GM23248 (cell line): ENCODE measurements at regions of chr4 and their contacts with region 1.

Region 1: GRCh38 chr4:155353923-155354540 is 22.7 kb downstream of the MAP9 start:
- DNase-seq: peak; percentile 70
- H3K4me3 ChIP-seq: no peak overlapping the region
- H3K27ac ChIP-seq: no peak overlapping the region
- H3K4me1 ChIP-seq: no peaks in the 10 kb centered on the region
- H3K27me3 ChIP-seq: no peaks in the 10 kb centered on the region

Region 2: GRCh38 chr4:154551872-154552686 is 802.0 kb before region 1 on chr4:
- in situ Hi-C with region 1: loop called (anchors 25 kb)
- DNase-seq: peak; percentile 89
- H3K4me3 ChIP-seq: no peak overlapping the region
- H3K27ac ChIP-seq: no peak overlapping the region
- H3K4me1 ChIP-seq: peaks cover 10% of the 10 kb centered on the region
- H3K27me3 ChIP-seq: no peaks in the 10 kb centered on the region

Region 3: DNA sequence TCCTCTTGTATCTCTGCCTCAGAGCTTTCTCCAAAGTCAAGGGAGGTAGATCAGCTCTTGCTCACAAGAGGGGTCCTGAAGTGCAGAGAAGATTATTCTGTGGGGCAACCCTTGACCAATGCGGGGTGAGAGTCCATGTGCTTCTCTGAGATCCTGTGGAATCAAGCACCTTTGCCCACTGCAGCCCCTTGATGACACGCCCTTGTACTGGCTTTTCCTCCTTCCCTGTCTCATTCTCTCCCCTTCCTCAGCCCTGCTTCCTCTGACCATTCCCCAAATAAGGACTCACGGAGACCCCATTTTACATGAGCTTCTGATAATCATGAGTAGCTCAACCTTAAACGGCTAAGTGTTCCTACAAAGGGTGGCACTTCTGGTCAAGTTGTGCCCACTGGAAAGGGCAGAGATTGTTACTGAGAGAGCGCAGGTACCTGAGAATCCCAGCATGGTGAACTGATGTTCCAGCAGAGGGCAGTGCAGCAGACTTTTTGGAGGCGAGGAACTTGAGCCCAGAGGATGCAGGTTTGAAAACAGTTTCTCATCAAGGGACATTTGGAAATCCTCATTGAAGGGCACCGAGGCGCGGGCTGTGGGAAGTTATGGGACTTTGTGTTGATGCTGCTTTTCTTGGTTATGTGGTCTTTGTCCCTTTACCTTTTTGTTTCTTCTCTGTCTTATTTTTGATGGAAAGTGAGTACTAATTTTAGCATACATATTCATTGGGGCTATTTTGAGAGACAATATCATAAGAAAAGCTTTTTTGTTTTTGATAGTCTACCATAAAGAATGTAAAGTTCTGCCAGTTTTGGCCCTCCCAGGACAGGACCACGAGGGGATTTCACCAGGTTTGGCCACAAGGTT is 371.6 kb before region 1 on chr4:
- in situ Hi-C with region 1: loop called (anchors 25 kb)
- DNase-seq: peak; percentile 75
- H3K4me3 ChIP-seq: no peak overlapping the region
- H3K27ac ChIP-seq: no peak overlapping the region
- H3K4me1 ChIP-seq: peaks cover 5% of the 10 kb centered on the region; the same call in 1 of the 2 replicates
- H3K27me3 ChIP-seq: 0 out of 2 replicates have a peak, but pooled peaks cover 3% of the 10 kb centered on the region